ENCODE measurements at regions of chr11 and their contacts with region 1.

Region 1: GRCh38 chr11:95150946-95151684 is 61.5 kb downstream of the ENDOD1 start:
- DNase-seq: peak; percentile 78
- ATAC-seq: peak; percentile 90
- H3K4me3 Mint-ChIP-seq: peak overlapping the region; percentile 89
- H3K27ac Mint-ChIP-seq: peak overlapping the region; percentile 93
- H3K4me1 Mint-ChIP-seq: peaks cover 38% of the 10 kb centered on the region
- H3K27me3 Mint-ChIP-seq: no peaks in the 10 kb centered on the region
- CTCF ChIP-seq: no peak

Region 2: DNA sequence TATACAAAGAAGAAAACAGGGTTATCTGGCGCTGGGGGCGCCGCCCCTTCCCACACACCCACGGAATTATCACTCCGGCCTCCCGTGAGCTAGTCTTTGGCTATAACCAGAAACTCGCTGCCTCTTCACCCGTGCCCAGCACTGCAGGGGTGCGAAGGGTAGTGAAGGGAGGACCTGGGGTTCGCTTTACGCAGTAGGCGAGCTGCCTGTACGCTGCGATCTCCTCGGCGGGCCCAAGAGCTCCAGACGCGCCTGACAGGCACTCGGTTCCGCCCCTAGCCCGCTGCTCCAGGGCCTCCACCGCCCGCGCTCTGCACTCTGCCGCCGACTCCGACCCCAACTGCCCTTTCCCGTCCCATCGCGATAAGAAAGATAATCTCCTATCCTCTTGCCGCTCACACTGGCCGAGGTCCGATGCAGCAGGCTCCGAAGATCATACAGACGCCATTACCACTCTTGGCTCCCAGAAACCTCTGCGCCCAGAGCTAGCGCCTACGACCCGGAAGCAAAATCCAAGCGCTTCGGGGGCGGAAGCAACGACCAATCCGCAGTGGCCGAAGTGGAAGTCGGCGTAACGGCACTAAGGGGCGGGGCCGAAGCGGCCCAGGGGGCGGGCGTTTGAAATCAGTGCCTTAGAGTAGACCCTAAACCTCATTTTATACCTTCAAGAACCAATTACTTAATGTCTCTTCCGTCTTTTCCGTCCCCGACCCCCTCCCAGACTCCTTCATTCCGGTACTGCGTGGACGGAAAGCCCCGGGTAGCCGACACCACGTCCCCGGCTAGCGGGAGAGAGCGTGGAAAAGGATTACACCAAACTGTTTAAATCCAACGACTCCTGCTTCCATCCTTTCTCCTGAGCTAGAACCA is 177.8 kb before region 1 on chr11 and contains the starts of genes CWC15 and KDM4D:
- CTCF ChIA-PET with region 1: no interaction called
- POLR2A ChIA-PET with region 1: interaction called, 7 read pairs
- intact Hi-C with region 1: loop called (anchors 1 kb)
- DNase-seq: peak; percentile 87
- ATAC-seq: peak; percentile 100
- H3K4me3 Mint-ChIP-seq: peak within 1 kb of the TSS; percentile 99
- H3K27ac Mint-ChIP-seq: peak within 1 kb of the TSS; percentile 95
- H3K4me1 Mint-ChIP-seq: peaks cover 20% of the 10 kb centered on the region
- H3K27me3 Mint-ChIP-seq: no peaks in the 10 kb centered on the region
- CTCF ChIP-seq: no peak
- total RNA-seq, gene CWC15: 69.1 and 69.2 TPM in 2 replicates
- total RNA-seq, gene KDM4D: 0.67 and 0.93 TPM in 2 replicates

Region 3: GRCh38 chr11:94988748-94989147 is 162.4 kb before region 1 on chr11:
- CTCF ChIA-PET with region 1: no interaction called
- POLR2A ChIA-PET with region 1: no interaction called
- intact Hi-C with region 1: no loop called
- DNase-seq: no peak
- ATAC-seq: no peak
- H3K4me3 Mint-ChIP-seq: no peak overlapping the region
- H3K27ac Mint-ChIP-seq: no peak overlapping the region
- H3K4me1 Mint-ChIP-seq: no peaks in the 10 kb centered on the region
- H3K27me3 Mint-ChIP-seq: peaks cover 12% of the 10 kb centered on the region
- CTCF ChIP-seq: no peak

Region 4: GRCh38 chr11:95296621-95297025 is 145.5 kb after region 1 on chr11:
- CTCF ChIA-PET with region 1: interaction called, 5 read pairs
- POLR2A ChIA-PET with region 1: interaction called, 3 read pairs
- intact Hi-C with region 1: loop called (anchors 5 kb)
- DNase-seq: peak; percentile 41
- ATAC-seq: peak; percentile 89
- H3K4me3 Mint-ChIP-seq: peak overlapping the region; percentile 79
- H3K27ac Mint-ChIP-seq: peak overlapping the region; percentile 89
- H3K4me1 Mint-ChIP-seq: peaks cover 50% of the 10 kb centered on the region
- H3K27me3 Mint-ChIP-seq: no peaks in the 10 kb centered on the region
- CTCF ChIP-seq: no peak

Region 5: DNA sequence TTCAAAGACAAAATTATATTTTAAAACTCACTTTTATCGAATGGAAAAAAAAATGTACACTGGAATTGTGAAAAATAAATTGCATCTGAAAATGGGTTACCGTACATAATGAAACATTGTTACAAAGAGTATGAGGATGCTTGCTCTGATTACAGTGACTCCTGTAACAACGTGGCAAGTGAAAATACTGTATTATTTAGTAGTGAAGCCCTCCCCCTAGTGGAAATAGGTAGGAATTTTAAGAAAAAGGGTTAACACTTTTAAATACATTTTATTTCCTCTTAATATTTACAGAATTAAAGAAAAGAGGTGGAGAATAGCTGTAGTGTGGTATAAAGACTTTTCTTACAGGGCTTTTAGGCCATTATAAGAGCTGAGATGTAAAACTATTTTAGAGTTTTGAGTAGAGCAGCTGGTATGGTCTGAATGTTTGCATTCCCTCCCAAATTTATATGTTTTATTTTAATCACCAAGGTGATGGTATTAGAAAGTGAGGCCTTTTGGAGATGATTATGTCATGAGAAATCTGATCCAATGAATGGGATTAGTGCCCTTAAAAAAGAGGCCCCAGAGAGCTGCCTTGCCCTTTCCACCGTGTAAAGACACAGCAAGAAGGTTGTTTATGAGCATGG is 613.3 kb after region 1 on chr11:
- CTCF ChIA-PET with region 1: interaction called, 167 read pairs
- POLR2A ChIA-PET with region 1: interaction called, 9 read pairs
- intact Hi-C with region 1: loop called (anchors 1 kb)
- DNase-seq: no peak
- ATAC-seq: peak; percentile 69
- H3K4me3 Mint-ChIP-seq: no peak overlapping the region
- H3K27ac Mint-ChIP-seq: no peak overlapping the region
- H3K4me1 Mint-ChIP-seq: peaks cover 23% of the 10 kb centered on the region
- H3K27me3 Mint-ChIP-seq: no peaks in the 10 kb centered on the region
- CTCF ChIP-seq: no peak

Region 6: DNA sequence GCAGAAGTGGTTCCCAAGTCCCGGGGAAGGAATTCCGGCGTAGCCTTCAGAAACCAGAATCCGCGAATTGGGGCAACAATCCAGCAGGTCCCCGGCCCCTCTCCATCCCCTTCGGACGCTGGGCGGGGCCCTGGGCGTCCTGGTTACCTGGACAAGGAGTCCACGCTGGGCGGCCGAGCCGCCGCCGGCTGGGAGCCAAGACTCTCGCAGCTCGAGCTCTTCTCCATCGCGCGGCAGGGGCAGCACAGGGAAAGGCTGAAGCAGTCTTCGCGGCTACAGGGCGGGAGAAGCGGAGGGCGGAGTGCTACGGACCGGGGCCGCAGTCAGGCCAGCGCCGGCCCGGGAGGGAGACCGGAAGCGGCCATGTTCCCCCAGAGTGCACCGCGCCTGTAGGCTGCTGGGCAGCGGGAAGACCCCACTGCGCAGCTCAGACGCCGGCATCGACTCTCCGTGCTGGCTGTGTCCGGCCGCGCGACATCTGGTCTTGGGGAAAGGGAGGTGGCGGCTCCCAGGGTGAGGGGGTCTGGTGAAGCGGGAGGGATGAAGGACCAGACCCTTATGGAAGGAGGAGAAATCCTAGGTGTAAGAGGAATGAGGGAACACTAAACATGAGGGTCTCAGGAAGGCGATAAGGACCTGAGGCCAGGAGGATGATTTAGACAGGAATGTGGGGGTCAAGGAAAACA is 772.8 kb after region 1 on chr11 and contains the start of gene MTMR2:
- CTCF ChIA-PET with region 1: no interaction called
- POLR2A ChIA-PET with region 1: no interaction called
- intact Hi-C with region 1: loop called (anchors 5 kb)
- DNase-seq: peak; percentile 60
- ATAC-seq: peak; percentile 98
- H3K4me3 Mint-ChIP-seq: peak within 1 kb of the TSS; percentile 100
- H3K27ac Mint-ChIP-seq: peak within 1 kb of the TSS; percentile 98
- H3K4me1 Mint-ChIP-seq: peaks cover 29% of the 10 kb centered on the region
- H3K27me3 Mint-ChIP-seq: peaks cover 9% of the 10 kb centered on the region
- CTCF ChIP-seq: no peak
- total RNA-seq, gene MTMR2: 22.6 and 25.1 TPM in 2 replicates

Region 7: GRCh38 chr11:96424693-96425092 is 1273.6 kb after region 1 on chr11:
- CTCF ChIA-PET with region 1: no interaction called
- POLR2A ChIA-PET with region 1: no interaction called
- intact Hi-C with region 1: loop called (anchors 2 kb)
- DNase-seq: no peak
- ATAC-seq: no peak
- H3K4me3 Mint-ChIP-seq: no peak overlapping the region
- H3K27ac Mint-ChIP-seq: no peak overlapping the region
- H3K4me1 Mint-ChIP-seq: no peaks in the 10 kb centered on the region
- H3K27me3 Mint-ChIP-seq: peaks cover 32% of the 10 kb centered on the region
- CTCF ChIP-seq: no peak